ENCODE measurements at regions of chr2 and their contacts with region 1.

Region 1: DNA sequence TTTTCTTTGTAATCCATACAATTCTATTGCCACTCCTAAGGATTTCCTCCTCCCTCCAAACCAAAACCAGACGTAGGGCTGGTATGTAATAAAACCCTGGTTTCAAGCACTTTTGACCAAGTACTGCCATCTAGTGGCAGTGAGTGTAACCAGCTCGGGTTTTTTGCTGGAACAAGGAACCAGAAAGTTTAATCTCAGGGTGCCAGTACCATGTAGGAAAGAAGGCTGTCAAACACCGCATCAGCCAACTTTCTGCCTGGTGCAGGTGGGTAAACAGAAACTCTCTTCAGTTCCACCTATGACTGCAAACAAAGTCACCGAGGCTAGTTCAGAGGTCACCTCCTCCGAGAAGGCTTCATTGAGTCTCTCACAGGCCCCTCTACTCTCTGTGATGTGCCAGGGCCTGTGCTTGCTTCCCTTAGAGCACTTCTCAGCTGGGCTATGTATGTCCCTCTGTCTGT is 10.2 kb upstream of the THNSL2 start:
- DNase-seq: no peak
- H3K4me3 ChIP-seq: no peak overlapping the region
- CTCF ChIP-seq: peak; percentile 78

Region 2: GRCh38 chr2:88170472-88170892 is 10.5 kb after region 1 on chr2:
- CTCF ChIA-PET with region 1: interaction called, 23 read pairs
- POLR2A ChIA-PET with region 1: interaction called, 4 read pairs
- DNase-seq: no peak
- H3K4me3 ChIP-seq: peak overlapping the region; percentile 59
- CTCF ChIP-seq: no peak

Region 3: GRCh38 chr2:88258208-88258607 is 98.2 kb after region 1 on chr2:
- CTCF ChIA-PET with region 1: no interaction called
- POLR2A ChIA-PET with region 1: no interaction called
- DNase-seq: no peak
- H3K4me3 ChIP-seq: no peak overlapping the region
- CTCF ChIP-seq: no peak